Right ventricle myocardium inferior (tissue), 1 donor: ENCODE measurements at regions of chr17 and their contacts with region 1.

Region 1: DNA sequence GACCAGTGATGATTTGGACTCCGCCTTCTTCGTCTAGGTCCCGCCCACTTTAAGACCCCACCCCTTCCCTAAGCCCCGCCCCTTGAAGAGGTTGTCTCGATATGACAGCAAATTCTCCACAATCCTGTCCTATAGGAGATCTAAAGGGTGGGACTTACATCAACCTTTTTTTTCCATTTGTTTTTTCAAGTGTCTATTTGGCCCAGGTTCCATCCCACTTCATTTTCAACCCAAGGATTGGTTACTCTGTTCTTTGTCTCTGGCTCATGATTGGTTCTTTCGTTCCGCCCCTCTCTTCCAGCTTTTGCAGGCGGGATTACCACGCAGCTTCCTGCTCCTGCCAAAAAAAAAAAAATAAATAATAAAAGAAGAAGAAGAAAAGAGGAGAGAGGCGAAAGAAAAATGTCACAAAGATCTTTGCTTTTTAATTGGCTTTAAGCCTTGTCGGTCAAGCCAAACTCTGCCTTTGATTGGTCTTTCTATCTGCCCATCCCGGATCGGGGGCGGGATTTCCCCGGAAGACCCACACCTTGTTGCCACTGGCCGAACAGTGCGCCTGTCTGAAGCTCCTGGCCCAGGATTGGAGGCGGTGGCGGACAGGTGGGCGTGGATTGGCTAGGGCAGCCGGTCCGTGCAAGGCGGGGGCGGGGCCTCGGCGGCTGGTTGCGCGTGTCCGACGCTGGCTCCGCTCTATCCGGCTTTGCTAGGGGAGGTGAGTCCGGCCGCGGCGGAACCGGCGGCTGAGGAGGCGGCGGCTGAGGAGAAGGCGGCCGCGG is 1.2 kb upstream of the NLK start:
- DNase-seq: peak; percentile 100
- ATAC-seq: peak; percentile 99

Region 2: DNA sequence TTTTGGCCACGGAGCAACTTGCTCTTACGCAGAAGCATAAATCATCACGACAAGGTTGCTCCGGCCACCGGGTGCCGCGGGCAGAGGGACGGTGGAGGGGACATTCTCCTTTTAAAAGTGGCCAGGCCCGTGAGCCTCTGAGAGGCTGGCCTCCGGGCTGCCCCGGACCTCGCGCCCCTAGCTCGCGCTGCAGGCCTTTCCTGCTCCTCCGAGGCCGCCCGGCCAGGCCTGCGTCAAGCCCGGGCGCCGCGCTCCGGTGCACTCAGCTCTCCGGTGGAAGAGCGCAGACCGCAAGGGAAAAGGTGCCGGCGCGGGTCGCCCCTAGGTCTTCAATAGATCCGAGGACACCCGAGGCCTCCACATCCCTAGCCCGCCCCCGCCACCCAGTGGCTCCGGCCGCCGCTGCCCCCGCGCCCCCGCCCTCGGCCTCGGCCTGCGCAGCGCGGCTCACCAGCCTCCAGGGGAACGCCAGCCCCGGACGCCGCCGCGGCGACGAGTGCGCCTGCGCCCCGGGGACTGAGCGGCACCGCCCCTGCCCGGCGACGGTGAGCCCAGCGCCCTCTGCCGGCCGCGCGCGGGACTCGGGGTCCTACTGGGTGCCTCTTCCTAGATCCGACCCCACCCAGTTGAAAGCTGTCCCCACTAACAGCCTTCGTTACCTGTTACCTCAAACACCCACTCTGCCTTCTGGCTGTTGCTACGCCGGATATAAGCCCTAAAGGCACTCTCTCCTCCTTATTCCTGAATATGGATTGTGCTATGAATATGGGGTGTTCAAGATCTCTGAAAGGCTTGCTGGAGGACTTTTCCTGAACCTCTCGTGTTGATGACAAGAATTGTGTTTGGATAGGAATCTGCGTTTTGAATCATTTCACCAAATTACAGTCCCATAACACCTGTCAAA is 148.1 kb before region 1 on chr17 and contains the start of gene LYRM9:
- intact Hi-C with region 1: loop called (anchors 5 kb)
- DNase-seq: peak; percentile 96
- ATAC-seq: peak; percentile 100
- total RNA-seq, gene LYRM9: 6.7 TPM

Region 3: DNA sequence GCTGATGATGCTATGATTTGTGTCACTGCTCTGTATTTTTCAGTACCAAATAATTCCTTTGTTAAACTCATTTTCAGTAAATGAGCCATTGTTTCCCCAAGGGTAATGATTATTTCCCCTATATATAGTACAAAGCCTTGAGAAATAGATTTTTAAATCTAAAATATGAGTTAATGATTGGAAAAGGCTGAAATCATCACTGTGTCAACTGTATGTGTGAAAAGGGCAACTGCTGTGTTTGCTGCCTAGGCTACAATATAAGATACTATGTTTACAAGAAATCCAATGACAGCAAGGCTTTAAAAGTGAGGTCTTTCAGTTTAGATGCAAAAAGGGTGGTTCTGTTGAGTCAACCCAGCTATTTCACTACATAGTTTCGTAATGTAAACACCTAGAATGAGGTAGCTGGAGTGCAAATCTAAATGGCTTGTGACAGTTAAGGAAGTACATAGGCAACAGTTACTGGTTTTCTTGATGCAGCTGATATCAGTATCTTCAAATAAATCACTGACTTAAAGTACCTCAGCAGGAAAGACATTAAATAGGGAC is 16.5 kb after region 1 on chr17:
- intact Hi-C with region 1: no loop called
- DNase-seq: no peak
- ATAC-seq: no peak

Region 4: GRCh38 chr17:28112220-28113005 is 71.2 kb after region 1 on chr17:
- intact Hi-C with region 1: loop called (anchors 10 kb)
- DNase-seq: no peak
- ATAC-seq: peak; percentile 39